Ascending aorta (tissue), 2 donors: ENCODE measurements at regions of chr12 and their contacts with region 1.

Region 1: DNA sequence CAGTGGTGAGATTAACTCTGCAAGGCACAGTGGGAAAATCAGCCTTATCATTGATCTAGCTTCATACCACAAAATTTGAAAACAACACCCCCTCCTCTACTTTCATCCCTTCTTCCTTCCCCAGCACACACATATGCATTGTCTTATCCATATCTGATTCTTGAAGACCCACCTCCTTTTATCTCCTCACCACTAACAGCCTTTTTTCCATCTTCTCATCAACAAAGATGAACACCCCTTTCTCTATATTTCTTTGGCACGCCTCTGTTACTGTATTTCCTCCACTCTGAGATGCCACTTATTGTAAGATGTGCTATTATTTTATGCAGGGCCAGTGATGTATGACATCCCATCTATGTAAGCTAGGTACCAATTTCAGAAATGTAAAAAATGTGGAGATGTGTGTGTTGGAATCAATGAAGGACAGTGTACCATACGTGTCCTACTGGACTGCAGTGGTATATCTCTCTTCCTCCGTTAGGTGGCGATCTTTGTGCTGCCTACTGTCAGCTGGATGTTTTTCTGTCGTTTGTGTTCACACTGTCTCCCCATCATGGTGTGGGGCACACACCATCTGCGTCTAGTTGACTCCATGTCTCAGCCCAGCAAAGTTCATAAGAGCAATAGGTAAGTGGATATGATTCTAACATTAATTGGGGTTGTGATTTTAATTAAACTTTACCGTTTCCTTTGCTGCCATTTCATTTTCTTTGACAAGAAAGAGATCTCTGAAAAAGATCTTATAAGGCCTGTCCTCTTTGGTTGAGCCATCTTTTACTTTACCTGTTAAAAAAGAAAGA is 24.0 kb downstream of the CCDC38 start:
- DNase-seq: no peak
- H3K4me3 ChIP-seq: no peak overlapping the region
- H3K27ac ChIP-seq: no peak overlapping the region
- H3K4me1 ChIP-seq: no peaks in the 10 kb centered on the region
- H3K27me3 ChIP-seq: no peaks in the 10 kb centered on the region
- CTCF ChIP-seq: peak; percentile 34 to 61 (median 47)

Region 2: DNA sequence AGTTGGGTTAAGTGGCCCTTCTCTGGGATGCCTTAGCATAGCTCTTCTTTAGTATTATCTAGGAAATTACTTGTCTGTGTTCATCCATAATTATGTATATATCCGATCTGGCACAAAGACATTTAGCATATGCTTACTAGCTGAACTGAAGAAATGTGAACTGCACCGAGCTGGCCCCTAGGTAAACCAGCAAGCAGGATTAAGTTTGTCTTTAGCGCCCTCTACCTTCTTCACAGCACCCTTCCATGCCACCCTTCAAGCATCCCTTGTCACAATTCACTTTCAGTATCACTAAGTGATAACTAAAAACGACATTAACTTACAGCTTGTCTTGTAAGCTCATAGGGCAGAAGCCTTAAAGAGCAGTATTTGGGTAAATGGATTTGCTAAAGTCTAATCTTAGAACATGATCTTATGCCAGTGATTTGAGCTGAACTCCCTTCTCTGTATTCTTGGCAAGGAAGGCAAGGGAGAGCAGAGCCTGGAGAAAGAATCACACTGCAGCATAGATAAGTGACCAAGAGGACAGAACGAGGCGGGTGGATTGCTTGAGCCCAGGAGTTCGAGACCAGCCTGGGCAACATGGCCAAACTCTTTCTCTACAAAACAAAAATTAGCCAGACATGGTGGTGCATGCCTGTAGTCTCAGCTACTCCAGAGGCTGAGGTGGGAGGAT is 80.4 kb after region 1 on chr12:
- intact Hi-C with region 1: loop called (anchors 2 kb)
- DNase-seq: no peak
- H3K4me3 ChIP-seq: no peak overlapping the region
- H3K27ac ChIP-seq: peak overlapping the region in 1 of 2 donors; percentile 11
- H3K4me1 ChIP-seq: no peaks in the 10 kb centered on the region
- H3K27me3 ChIP-seq: no peaks in the 10 kb centered on the region
- CTCF ChIP-seq: peak; percentile 24 to 76 (median 48)